Endothelial cell of umbilical vein (primary cell): ENCODE measurements at regions of chr10 and their contacts with region 1.

Region 1: DNA sequence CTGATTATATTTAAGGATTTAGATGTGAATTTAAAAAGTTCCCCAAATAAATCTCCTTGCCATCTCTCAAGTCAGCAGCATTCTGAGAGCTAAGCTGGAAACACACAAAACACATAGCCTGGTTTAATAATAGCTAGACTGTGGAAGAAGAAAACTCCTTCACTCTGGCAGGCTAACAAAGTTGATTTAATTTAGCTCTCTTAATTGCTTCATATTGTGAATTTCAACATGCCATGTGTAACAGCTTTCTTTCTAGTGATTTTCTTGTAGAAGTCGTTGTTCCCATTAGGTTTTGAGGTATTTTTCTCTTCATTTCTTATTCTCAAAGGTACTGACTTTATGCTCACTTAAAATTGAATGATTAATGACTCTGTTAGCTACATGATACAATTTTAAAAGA is 216.8 kb upstream of the AKR1E2 start:
- DNase-seq: no peak
- H3K4me3 ChIP-seq: no peak overlapping the region
- H3K27ac ChIP-seq: no peak overlapping the region
- H3K4me1 ChIP-seq: no peaks in the 10 kb centered on the region
- H3K27me3 ChIP-seq: no peaks in the 10 kb centered on the region
- CTCF ChIP-seq: no peak
- POLR2A ChIP-seq: no peak

Region 2: GRCh38 chr10:4532467-4532866 is 76.8 kb before region 1 on chr10:
- CTCF ChIA-PET with region 1: no interaction called
- POLR2A ChIA-PET with region 1: no interaction called
- dilution Hi-C with region 1: no loop called
- intact Hi-C with region 1: no loop called
- DNase-seq: no peak
- H3K4me3 ChIP-seq: no peak overlapping the region
- H3K27ac ChIP-seq: no peak overlapping the region
- H3K4me1 ChIP-seq: no peaks in the 10 kb centered on the region
- H3K27me3 ChIP-seq: no peaks in the 10 kb centered on the region
- CTCF ChIP-seq: no peak
- POLR2A ChIP-seq: no peak

Region 3: DNA sequence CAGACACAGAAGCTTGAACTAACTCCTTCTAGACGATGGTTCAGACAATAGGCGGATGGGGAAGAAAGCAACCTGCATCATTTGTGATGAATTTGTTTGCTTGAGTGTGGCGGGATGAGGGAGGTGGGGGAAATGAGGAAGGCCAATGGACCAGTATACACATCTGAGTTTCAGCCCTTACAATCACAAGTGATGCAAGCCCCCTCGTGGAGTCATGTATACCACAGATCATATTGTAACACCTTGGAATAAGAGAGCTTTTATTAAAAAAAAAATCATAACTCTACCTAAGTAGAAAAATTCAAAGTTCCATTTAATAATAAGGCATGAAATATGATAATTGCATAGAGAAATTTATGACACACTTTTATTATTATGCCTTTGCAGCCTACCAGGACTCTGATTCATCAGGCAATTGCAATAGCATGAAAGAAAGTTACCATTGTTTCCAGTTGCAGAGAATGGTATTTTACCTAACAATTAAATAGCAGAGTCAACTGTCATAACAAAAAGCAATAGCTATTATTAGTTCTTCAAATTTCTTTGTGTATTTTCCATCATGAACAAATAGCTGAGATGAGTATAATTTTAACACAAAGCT is 13.4 kb before region 1 on chr10:
- CTCF ChIA-PET with region 1: interaction called, 10 read pairs
- POLR2A ChIA-PET with region 1: no interaction called
- dilution Hi-C with region 1: no loop called
- intact Hi-C with region 1: no loop called
- DNase-seq: no peak
- H3K4me3 ChIP-seq: no peak overlapping the region
- H3K27ac ChIP-seq: no peak overlapping the region
- H3K4me1 ChIP-seq: no peaks in the 10 kb centered on the region
- H3K27me3 ChIP-seq: no peaks in the 10 kb centered on the region
- CTCF ChIP-seq: no peak
- POLR2A ChIP-seq: no peak